GM12878 (cell line): ENCODE measurements at regions of chr7 and their contacts with region 1.

Region 1: DNA sequence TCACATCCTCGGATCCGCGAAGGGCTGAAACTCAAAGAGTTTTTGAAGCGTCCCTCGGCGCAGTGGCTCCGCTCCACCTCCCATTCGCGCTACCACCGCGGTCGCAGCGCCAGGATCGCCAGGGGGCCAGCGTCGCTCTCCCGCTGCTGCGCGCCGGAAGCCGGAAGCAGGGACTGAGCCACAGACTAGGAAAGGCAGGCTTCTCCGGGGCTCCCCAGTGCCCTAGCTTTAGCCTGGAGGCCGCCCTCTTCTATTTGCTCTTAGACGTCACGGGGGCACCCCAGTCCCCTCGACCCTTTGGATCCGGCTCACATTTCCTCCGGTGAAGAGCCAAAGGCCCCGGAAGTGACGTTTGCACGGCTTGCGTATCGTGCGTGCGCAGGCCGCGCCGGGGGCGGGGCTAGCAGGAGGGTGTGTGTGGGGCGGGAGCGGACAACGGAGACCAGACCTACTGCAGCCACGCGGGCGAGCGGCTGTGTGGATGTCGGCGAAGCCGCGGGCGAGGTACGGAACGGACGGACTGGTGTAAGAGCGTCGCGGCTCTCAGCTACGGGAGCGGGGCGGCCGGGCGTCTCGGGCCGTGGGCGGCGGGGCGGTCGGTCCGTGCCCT is 25.5 kb downstream of the KCTD7 start:
- DNase-seq: peak; percentile 93
- ATAC-seq: peak; percentile 96
- H3K4me3 ChIP-seq: peak overlapping the region; percentile 87
- H3K27ac ChIP-seq: peak overlapping the region; percentile 98
- H3K4me1 ChIP-seq: no peaks in the 10 kb centered on the region
- H3K27me3 ChIP-seq: no peaks in the 10 kb centered on the region
- CTCF ChIP-seq: peak in 2 of 3 experiments; percentile 16 to 28; a peak in 2 of 6 replicates
- EP300 ChIP-seq: no peak
- POLR2A ChIP-seq: peak; percentile 94
- RAD21 ChIP-seq: no peak

Region 2: GRCh38 chr7:66591799-66592596 is 62.2 kb before region 1 on chr7:
- CTCF ChIA-PET with region 1: no interaction called
- POLR2A ChIA-PET with region 1: no interaction called
- RAD21 ChIA-PET with region 1: no interaction called
- SMC1A ChIA-PET with region 1: no interaction called
- in situ Hi-C with region 1: no loop called
- intact Hi-C with region 1: loop called (anchors 2 kb)
- DNase-seq: peak; percentile 64
- ATAC-seq: peak; percentile 97
- H3K4me3 ChIP-seq: peak overlapping the region; percentile 86
- H3K27ac ChIP-seq: peak overlapping the region; percentile 64
- H3K4me1 ChIP-seq: peaks cover 4% of the 10 kb centered on the region; the same call in 1 of the 2 replicates
- H3K27me3 ChIP-seq: no peaks in the 10 kb centered on the region
- CTCF ChIP-seq: no peak
- EP300 ChIP-seq: no peak
- POLR2A ChIP-seq: peak; percentile 96
- RAD21 ChIP-seq: no peak

Region 3: DNA sequence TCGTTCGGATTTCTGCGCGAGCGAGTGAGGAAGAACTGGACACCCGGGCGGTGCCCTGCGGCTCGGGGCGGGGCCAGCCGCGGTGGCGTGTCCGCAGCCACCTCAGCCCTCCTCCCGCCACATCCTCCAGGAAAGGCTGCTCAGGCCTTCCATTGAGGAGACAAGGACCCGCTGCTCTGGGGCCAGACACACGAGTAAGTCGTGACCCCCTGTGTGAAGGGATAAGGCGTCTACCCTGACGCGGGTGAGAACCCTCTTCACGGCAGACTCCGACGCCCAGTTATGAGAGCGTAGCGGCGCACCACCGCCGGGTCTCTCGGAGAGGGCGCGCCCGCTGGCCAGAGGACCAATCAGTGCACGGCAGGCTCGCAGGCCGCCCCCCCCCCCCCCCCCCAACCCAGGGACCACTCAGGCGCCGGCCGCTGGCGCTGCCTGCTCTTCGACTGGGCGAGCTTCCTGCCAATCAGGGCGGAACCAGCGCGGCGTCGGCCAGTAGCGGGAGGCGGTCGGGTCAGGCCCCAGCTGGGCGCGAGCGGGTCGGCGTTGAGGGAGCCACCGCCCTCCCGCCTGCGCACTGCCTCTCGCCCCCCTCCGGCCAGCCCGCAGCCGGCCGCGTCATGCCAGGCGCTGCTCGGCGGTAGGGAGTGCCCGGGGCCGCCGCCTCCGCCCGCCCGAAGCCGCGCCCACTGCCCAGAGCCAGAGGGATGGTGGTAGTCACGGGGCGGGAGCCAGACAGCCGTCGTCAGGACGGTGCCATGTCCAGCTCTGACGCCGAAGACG is 25.7 kb before region 1 on chr7 and contains the start of gene KCTD7:
- CTCF ChIA-PET with region 1: interaction called, 3 read pairs
- POLR2A ChIA-PET with region 1: interaction called, 9 read pairs
- RAD21 ChIA-PET with region 1: interaction called, 12 read pairs
- SMC1A ChIA-PET with region 1: interaction called, 6 read pairs
- in situ Hi-C with region 1: no loop called
- intact Hi-C with region 1: no loop called
- DNase-seq: peak; percentile 80
- ATAC-seq: peak; percentile 94
- H3K4me3 ChIP-seq: peak within 1 kb of the TSS; percentile 88
- H3K27ac ChIP-seq: peak within 1 kb of the TSS; percentile 74
- H3K4me1 ChIP-seq: peaks cover 43% of the 10 kb centered on the region
- H3K27me3 ChIP-seq: no peaks in the 10 kb centered on the region
- CTCF ChIP-seq: no peak
- EP300 ChIP-seq: no peak
- POLR2A ChIP-seq: peak; percentile 99
- RAD21 ChIP-seq: no peak
- polyA plus RNA-seq, gene KCTD7: 1.6 TPM

Region 4: DNA sequence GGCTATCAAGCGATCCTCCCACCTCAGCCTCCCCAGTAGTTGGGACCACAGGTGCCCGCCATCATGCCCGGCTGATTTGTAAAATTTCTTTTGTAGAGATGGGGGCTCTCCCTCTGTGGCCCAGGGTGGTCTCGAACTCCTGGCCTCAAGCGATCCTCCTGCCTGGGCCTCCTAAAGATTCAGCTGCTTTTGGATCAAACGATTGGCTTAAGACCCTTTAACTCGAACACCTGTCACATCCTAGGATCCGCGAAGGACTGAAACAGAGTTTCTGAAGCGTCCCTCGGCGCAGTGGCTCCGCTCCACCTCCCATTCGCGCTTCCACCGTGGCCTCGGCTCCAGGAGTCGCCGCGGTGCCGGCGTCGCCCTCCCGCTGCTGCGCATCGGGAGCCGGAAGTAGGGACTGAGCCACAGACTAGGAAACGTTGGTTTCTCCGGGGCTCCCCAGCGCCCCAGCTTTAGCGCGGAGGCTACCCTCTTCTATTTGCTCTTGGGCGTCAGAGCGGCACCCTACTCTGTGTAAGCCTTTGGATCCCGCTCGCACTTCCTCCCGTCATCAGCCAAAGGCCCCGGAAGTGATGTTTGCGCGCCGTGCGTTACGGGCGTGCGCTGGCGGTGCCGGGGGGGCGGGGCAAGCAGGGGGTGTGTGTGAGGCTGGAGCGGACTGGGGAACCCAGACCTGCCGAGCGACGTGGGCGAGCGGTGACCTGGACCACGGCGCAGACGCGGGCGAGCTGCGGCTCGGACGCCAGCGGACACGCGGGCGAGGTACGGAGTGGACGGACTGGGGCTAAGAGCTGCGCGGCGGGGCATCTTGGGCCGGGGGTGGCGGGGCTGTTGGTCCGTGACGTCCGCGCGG is 27.5 kb after region 1 on chr7:
- CTCF ChIA-PET with region 1: no interaction called
- POLR2A ChIA-PET with region 1: interaction called, 4 read pairs
- RAD21 ChIA-PET with region 1: interaction called, 3 read pairs
- SMC1A ChIA-PET with region 1: no interaction called
- in situ Hi-C with region 1: no loop called
- intact Hi-C with region 1: loop called (anchors 2 kb)
- DNase-seq: peak; percentile 72
- ATAC-seq: peak; percentile 97
- H3K4me3 ChIP-seq: peak overlapping the region; percentile 93
- H3K27ac ChIP-seq: peak overlapping the region; percentile 89
- H3K4me1 ChIP-seq: peaks cover 12% of the 10 kb centered on the region
- H3K27me3 ChIP-seq: no peaks in the 10 kb centered on the region
- CTCF ChIP-seq: no peak
- EP300 ChIP-seq: no peak
- POLR2A ChIP-seq: peak; percentile 92
- RAD21 ChIP-seq: no peak

Region 5: GRCh38 chr7:66697449-66698438 is 43.5 kb after region 1 on chr7:
- CTCF ChIA-PET with region 1: no interaction called
- POLR2A ChIA-PET with region 1: no interaction called
- RAD21 ChIA-PET with region 1: no interaction called
- SMC1A ChIA-PET with region 1: no interaction called
- in situ Hi-C with region 1: no loop called
- intact Hi-C with region 1: no loop called
- DNase-seq: no peak
- ATAC-seq: no peak; the same call in 2 of the 3 replicates
- H3K4me3 ChIP-seq: no peak overlapping the region
- H3K27ac ChIP-seq: no peak overlapping the region
- H3K4me1 ChIP-seq: no peaks in the 10 kb centered on the region
- H3K27me3 ChIP-seq: no peaks in the 10 kb centered on the region
- CTCF ChIP-seq: no peak
- EP300 ChIP-seq: no peak
- POLR2A ChIP-seq: no peak
- RAD21 ChIP-seq: no peak

Region 6: GRCh38 chr7:66720561-66720960 is 66.3 kb after region 1 on chr7:
- CTCF ChIA-PET with region 1: no interaction called
- POLR2A ChIA-PET with region 1: no interaction called
- RAD21 ChIA-PET with region 1: no interaction called
- SMC1A ChIA-PET with region 1: no interaction called
- in situ Hi-C with region 1: no loop called
- intact Hi-C with region 1: no loop called
- DNase-seq: no peak
- ATAC-seq: no peak
- H3K4me3 ChIP-seq: no peak overlapping the region
- H3K27ac ChIP-seq: no peak overlapping the region
- H3K4me1 ChIP-seq: no peaks in the 10 kb centered on the region
- H3K27me3 ChIP-seq: no peaks in the 10 kb centered on the region
- CTCF ChIP-seq: no peak
- EP300 ChIP-seq: no peak
- POLR2A ChIP-seq: no peak
- RAD21 ChIP-seq: no peak

Region 7: GRCh38 chr7:66740302-66740979 is 86.2 kb after region 1 on chr7 and contains the start of gene RABGEF1:
- CTCF ChIA-PET with region 1: no interaction called
- POLR2A ChIA-PET with region 1: interaction called, 8 read pairs
- RAD21 ChIA-PET with region 1: interaction called, 3 read pairs
- SMC1A ChIA-PET with region 1: no interaction called
- in situ Hi-C with region 1: no loop called
- intact Hi-C with region 1: loop called (anchors 10 kb)
- DNase-seq: peak; percentile 89
- ATAC-seq: peak; percentile 93
- H3K4me3 ChIP-seq: peak within 1 kb of the TSS; percentile 100
- H3K27ac ChIP-seq: peak within 1 kb of the TSS; percentile 88
- H3K4me1 ChIP-seq: peaks cover 18% of the 10 kb centered on the region
- H3K27me3 ChIP-seq: no peaks in the 10 kb centered on the region
- CTCF ChIP-seq: no peak
- EP300 ChIP-seq: 0 out of 4 replicates have a peak, but pooled peaks of 1 of the 2 experiments have one; percentile 28
- POLR2A ChIP-seq: peak; percentile 96
- RAD21 ChIP-seq: no peak
- polyA plus RNA-seq, gene RABGEF1: 10.2 to 11.8 TPM

Region 8: GRCh38 chr7:66844552-66845378 is 190.5 kb after region 1 on chr7:
- CTCF ChIA-PET with region 1: no interaction called
- POLR2A ChIA-PET with region 1: interaction called, 3 read pairs
- RAD21 ChIA-PET with region 1: interaction called, 4 read pairs
- SMC1A ChIA-PET with region 1: no interaction called
- in situ Hi-C with region 1: no loop called
- intact Hi-C with region 1: loop called (anchors 10 kb)
- DNase-seq: peak; percentile 92
- ATAC-seq: peak; percentile 93
- H3K4me3 ChIP-seq: peak overlapping the region; percentile 93
- H3K27ac ChIP-seq: peak overlapping the region; percentile 61
- H3K4me1 ChIP-seq: no peaks in the 10 kb centered on the region; the same call in 1 of the 2 replicates
- H3K27me3 ChIP-seq: no peaks in the 10 kb centered on the region
- CTCF ChIP-seq: peak in 1 of 3 experiments; percentile 36; a peak in 1 of 6 replicates
- EP300 ChIP-seq: no peak
- POLR2A ChIP-seq: peak; percentile 94
- RAD21 ChIP-seq: no peak

Region 9: GRCh38 chr7:67251986-67252558 is 597.8 kb after region 1 on chr7:
- CTCF ChIA-PET with region 1: no interaction called
- POLR2A ChIA-PET with region 1: no interaction called
- RAD21 ChIA-PET with region 1: no interaction called
- SMC1A ChIA-PET with region 1: no interaction called
- in situ Hi-C with region 1: no loop called
- intact Hi-C with region 1: no loop called
- DNase-seq: no peak
- ATAC-seq: no peak
- H3K4me3 ChIP-seq: no peak overlapping the region
- H3K27ac ChIP-seq: no peak overlapping the region
- H3K4me1 ChIP-seq: no peaks in the 10 kb centered on the region
- H3K27me3 ChIP-seq: no peaks in the 10 kb centered on the region
- CTCF ChIP-seq: no peak
- EP300 ChIP-seq: no peak
- POLR2A ChIP-seq: no peak
- RAD21 ChIP-seq: no peak